Left cardiac atrium (tissue), 4 donors: ENCODE measurements at regions of chr1 and their contacts with region 1.

Region 1: DNA sequence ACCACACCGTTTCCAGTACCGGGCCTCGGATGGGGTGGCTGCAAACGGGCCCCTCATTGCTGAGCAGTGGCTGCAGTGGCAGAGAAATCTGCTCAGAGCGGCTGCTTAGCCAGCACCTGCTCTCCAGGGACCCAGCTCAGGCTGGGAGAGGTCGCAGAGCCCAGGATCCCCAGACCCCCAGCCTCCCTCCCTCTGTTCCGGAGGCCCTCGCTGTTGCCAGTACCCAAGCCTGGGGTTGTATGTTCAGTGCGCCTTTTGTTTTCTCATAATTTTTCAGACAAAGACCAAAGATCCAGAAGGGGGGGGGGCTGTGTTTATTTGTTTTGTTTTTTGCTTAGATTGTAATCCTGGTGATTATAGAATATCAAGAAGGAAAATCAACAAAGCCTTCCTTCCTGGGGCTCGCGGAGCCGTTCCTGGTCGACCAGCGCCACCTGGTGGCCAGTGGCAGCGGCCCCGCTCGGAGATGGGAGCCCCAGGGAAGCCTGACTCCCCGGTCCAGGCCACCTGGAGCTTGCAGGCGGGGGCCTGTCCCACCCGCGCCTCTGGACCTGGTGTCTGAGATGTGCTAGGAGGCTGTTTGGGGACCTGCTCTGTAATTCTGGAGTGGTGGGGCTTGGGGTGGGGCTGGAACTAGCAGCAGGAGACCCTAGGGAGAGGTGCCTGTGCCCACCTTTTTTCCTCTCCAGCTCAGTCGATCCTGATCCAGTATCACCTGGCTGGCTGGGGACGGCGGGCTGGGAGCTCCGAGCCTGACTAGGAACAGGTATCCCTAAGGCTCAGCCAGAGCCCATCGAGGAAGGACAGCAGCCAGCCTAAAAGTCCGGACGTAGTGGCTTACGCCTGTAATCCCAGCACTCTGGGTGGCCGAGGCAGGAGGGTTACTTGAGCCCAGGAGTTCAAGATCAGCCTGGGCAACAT is 123.9 kb upstream of the VAMP3 start:
- DNase-seq: peak; percentile 76
- ATAC-seq: peak in 1 of 2 donors; percentile 48

Region 2: DNA sequence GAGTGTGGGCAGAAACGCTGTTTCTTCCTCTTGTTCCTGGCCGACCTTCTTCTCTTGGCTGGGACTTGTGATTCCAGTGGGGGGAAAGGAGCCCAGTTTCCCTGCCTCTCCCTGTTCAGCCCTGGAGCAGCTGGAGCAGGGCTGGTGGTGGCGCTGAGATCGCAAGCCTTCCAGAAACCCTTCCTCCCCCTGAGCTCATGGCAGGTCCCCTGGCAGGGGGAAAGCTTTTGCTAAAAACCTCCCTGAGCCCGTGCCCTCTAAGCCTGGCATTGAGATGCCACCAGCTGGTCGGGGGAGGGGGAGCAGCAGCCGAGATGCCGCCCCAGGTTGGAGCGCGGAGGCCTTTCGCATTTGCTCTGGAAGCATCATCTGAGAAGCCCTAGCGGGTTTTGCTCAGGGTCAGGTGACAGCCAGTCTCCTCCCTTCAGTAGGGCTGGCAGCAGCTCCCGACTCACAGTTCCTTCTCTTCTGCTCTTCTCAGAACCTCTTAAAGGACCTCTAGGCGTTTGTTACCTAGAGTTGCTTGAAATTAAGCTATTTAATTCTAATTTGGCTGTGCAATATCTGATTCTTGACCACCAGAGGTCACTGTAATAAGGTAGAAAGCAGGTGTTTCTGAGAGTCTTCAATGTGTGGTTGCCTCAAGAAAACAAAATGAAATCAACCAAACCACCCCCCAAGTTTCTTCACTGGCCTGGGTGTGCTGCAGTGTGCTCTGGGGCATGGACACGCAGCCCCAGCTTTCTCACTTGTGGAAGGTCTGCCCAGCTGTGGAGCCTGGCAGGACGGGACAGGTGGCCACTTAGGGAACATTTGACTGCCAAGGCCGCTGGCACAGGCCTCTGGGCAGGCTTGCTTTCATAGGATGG is 604.7 kb before region 1 on chr1:
- intact Hi-C with region 1: loop called in 1 of 2 experiments (anchors 10 kb)
- DNase-seq: no peak
- ATAC-seq: no peak

Region 3: DNA sequence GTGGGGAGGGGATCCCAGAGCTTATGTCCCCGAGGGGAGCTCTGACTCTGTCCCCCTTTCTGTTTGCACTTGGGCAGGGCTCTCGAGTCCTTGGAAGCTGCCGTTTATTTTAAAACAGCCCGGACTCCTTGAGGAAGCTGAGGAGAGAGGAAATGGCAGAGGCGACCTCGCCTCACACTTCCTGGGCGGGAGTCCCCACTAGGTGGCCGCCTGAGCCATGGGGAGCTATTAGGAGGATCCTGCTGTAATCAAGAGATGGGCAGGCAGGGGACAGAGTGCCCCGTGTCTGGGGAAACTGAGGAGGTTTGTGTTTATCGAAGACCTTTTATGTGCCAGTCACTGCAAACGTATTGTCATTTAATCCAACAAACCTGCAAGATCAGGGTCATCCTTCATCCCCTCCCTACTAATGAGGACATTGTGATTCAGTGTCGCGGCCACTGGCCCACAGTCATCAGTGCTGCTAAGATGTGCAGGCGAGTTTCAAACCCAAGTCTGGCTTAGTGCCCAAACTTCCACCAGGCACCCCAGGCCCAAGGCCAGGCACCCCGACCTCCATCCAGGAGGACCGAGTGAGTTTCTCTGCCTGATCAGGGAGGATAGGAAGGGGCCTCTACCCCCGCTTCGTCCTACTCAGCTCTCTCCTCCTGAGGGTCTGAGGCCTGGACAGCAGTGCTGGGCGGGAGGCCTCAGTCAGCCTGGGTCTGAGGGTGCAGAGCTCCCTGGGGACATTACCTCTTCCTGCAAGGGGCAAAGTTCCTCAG is 193.0 kb before region 1 on chr1:
- intact Hi-C with region 1: loop called (anchors 2 to 10 kb)
- DNase-seq: no peak
- ATAC-seq: peak; percentile 44 to 57

Region 4: DNA sequence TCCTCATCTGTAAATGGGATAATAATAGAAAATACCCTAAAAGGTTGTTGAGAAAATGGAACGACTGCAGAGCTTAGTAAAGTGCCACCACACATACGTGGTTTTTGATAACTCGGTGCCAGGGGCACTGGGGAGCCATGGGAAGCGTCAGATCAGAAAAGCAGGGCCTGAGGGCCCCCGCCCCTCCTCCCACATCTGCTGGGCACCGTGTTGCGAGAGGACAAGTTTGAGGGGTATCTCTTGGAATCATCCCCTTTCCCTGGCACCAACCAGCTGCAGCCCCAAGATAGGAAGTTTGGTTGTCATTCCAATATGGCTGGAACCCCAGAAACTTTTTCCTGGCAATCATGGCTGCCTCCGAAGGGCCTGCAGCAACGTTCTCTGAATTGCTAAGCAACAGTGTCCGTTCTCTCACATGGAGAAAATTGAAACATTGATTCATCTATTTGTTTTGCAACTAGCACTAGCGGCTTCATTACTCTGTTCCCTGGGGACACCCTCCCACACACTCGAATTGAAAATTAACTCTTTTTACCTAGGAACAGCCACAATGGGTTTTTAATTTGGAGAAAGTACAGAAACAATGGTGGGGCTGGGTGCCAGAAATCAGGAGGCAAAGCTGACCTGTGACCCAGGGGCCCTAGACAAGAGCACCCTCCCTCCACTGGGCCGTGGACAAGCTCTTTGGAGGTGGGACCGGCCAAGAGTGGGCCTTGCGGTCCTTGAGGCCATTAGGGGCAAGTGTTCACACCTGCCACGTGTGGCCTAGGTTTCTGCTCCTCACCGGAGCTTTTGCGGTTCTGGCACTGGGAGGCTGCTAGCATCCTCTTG is 66.1 kb before region 1 on chr1:
- intact Hi-C with region 1: loop called (anchors 1 to 5 kb)
- DNase-seq: peak; percentile 19
- ATAC-seq: no peak